ENCODE measurements at regions of chr2 and their contacts with region 1.

Region 1: DNA sequence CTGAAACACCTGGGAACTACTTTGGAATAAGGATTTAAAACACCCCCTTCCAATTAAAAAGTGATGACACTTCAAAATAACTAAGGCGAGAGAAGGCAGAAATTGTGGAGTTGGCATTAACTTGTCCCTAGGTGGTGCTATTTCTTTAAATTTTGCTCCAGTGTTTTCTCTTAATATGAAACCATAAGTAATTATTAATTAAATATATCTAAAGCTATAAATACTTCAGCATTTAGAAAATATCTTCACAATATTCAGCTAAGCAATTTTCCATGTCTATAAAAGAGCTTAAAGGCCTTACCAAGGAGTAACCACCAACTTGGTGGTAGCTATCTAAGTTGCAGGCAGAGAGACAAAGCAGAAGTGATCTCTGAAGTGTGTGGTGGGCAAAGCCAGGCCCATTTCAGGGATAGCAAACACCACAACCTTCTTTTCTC is 186.8 kb upstream of the PGAP1 start:
- DNase-seq: no peak
- H3K4me3 ChIP-seq: no peak overlapping the region
- H3K27me3 ChIP-seq: no peaks in the 10 kb centered on the region
- CTCF ChIP-seq: peak; percentile 55

Region 2: DNA sequence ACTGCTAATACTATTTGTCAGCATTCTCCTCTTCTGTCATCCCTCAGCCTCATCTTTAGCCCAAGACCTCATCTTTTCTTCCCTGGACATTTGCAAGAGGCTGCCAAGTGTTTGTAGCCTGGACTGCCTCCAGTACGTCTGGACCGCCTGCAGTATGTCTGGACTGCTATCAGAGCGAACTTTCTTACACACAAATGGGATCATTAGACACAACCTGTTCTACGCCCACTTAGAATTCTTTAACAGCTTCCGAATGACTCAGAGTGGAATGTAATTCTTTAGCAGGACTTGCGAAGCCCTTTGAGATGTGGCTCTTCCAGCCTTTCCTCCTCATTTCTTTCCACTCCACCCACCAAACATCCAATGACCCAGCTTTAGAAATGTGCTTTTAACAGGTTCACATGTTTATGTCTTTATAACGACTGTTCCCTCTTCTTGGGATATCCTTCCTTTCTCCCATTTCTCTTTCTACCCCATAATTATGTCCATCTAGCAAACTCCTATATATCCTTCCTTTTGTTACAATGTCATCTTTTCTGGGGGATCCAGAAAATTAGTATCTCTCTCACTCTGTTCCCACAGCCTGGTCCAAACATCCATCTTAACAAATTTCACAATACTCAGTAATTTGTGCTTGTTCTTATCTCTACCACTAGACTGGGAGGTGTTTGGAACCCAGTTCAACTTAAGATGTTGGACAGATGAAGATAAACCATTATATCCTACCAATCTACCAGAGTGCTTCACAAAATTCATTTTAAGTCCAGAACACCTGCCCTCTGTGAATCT is 15.5 kb before region 1 on chr2:
- CTCF ChIA-PET with region 1: interaction called, 17 read pairs
- POLR2A ChIA-PET with region 1: no interaction called
- DNase-seq: peak; percentile 54
- H3K4me3 ChIP-seq: no peak overlapping the region
- H3K27me3 ChIP-seq: no peaks in the 10 kb centered on the region
- CTCF ChIP-seq: no peak

Region 3: DNA sequence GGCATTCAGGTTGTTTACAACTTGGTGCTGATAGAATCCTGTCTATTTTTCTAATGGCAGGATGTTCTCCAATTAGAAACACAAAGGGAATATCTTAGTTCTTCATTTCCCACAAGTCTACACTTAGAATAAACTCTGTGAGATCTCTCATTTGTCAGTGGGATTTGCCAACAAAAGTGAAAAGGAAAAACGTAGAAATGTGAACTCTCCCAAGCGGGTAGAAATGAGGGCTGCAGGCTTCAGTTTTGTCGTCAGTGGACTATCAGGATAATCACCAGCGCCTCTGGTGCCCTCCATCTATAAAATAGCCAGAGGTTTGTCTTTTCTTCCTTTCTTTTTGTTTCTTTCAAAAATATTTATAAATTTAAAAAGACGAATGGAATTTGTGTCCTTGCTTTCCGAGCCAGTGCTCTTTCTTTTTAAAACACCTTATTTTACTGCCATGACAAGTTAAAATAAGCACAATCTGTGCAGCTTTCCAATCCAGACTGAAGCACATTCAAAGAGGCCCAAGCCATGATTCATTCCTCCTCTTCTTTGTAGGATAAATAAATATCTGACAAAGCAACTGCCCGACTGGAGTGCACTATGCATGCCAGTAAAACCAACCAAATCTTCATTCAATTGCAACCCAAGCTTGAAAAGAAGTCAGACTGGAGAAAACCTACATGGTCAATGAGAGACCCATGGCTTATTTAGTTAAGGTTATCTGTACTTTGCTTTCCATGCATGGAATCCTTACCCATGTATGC is 11.5 kb after region 1 on chr2:
- CTCF ChIA-PET with region 1: interaction called, 23 read pairs
- POLR2A ChIA-PET with region 1: no interaction called
- DNase-seq: no peak
- H3K4me3 ChIP-seq: no peak overlapping the region
- H3K27me3 ChIP-seq: no peaks in the 10 kb centered on the region
- CTCF ChIP-seq: no peak

Region 4: DNA sequence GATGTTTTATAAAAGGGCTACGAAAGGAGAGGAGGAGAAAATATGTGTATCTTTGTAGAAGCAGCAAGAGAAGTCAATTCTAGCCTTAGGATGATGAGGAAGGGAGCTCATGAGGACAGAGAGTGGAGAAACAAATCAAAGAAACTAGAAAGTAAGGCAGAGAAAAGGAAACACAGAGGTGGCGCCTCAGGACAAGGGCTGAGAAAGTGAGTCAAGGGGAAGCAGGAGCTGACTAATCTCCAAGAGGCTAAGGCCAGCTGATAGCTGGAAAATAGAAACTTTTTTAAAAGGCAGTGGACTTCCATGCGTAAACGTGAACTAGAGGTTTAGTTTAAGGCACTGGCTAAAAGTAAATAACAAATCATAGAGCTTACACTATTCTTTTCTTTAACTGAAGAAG is 23.9 kb after region 1 on chr2:
- CTCF ChIA-PET with region 1: interaction called, 10 read pairs
- POLR2A ChIA-PET with region 1: no interaction called
- DNase-seq: no peak
- H3K4me3 ChIP-seq: no peak overlapping the region
- H3K27me3 ChIP-seq: no peaks in the 10 kb centered on the region
- CTCF ChIP-seq: no peak

Region 5: DNA sequence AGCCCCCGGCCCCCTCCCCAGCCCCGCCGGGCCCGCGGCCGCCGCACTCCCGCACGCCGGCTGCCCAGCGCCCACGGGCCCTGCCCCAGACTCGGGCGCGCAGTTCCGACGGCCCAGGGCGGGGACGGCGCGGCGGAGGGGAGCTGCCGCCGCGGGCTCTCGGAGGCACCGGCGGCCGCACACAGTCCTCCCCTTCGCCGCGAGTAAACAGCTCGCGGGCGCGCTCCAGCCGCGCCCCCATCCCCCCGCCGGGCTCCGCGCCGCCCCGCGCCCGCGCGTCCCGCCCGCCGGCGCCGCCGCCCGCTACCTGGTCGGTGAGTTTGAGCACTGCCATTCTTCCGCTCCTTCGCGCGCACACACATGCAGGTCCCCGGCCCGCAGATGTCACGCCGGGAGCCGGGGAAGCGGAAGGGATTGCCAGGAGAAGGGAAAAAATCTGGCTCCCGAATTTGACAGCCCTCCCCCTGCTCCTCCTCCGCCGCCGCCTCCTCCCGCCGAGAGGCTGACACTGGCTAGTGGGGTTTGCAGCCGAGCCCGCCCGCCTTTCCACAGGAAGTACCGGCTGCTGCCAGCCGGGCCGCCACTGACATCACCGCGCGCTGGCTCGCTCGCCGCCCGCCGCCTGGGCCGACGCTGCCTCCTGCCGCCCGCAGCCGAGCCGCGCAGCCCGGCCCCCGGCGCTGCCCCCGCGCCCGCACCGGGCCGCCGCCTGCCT is 197.1 kb after region 1 on chr2 and contains the start of gene ANKRD44:
- CTCF ChIA-PET with region 1: interaction called, 14 read pairs
- POLR2A ChIA-PET with region 1: no interaction called
- DNase-seq: peak; percentile 9
- H3K4me3 ChIP-seq: peak within 1 kb of the TSS; percentile 80
- H3K27me3 ChIP-seq: peaks cover under 1% of the 10 kb centered on the region; the same call in 1 of the 2 replicates
- CTCF ChIP-seq: 0 out of 2 replicates have a peak, but pooled peaks have one; percentile 3
- polyA plus RNA-seq, gene ANKRD44: 7.1 and 12.4 TPM in 2 replicates

Region 6: DNA sequence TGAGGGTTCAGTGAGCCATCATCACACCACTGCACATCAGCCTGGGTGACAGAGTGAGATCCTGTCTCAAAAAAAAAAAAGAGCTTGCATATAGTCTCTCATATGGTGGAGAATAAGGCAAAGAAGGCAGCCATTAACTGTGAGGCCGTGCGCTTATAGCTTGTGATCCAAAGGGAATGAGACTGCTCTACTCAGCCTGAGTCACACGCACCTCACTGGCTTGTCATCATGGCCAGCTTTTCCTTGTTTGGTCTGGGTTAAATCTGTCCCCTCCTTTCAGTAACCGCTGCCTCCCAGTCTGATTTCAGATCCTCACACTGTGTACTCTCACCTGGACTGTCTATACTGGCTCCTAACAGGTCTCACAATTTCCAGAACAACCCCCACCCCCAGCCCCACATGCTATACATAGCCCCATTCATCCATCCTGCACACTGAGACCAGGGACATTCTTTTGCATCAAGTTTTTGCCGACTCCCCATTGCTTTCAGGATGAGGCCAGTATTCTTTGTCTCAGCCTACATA is 232.6 kb after region 1 on chr2:
- CTCF ChIA-PET with region 1: no interaction called
- POLR2A ChIA-PET with region 1: no interaction called
- DNase-seq: no peak
- H3K4me3 ChIP-seq: no peak overlapping the region
- H3K27me3 ChIP-seq: no peaks in the 10 kb centered on the region
- CTCF ChIP-seq: no peak